Left cardiac atrium (tissue), 4 donors: ENCODE measurements at regions of chr22 and their contacts with region 1.

Region 1: GRCh38 chr22:28855355-28856094 is 27.8 kb upstream of the ZNRF3 start:
- DNase-seq: no peak
- ATAC-seq: peak; percentile 44 to 77

Region 2: DNA sequence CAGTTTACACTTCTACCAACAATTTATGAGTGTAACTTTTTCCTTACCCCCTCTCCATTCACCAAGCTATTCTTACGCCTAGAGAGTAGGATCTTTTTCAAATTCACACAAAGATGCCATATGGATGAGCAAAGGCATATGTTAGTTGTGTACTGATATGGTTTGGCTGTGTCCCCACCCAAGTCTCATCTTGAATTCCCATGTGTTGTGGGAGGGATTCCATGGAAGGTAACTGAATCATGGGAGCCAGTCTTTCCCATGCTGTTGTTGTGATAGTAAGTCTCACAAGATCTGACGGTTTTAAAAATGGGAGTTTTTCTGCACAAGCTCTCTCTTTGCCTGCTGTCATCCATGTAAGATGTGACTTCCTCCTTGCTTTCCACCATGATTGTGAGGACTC is 216.2 kb before region 1 on chr22:
- intact Hi-C with region 1: no loop called
- DNase-seq: no peak
- ATAC-seq: no peak

Region 3: GRCh38 chr22:28951969-28952521 is 96.5 kb after region 1 on chr22:
- intact Hi-C with region 1: loop called in 1 of 2 experiments (anchors 5 kb)
- DNase-seq: no peak
- ATAC-seq: peak; percentile 29 to 72

Region 4: GRCh38 chr22:29040385-29041275 is 185.1 kb after region 1 on chr22:
- intact Hi-C with region 1: loop called (anchors 1 to 5 kb)
- DNase-seq: peak; percentile 74
- ATAC-seq: peak; percentile 82 to 87

Region 5: DNA sequence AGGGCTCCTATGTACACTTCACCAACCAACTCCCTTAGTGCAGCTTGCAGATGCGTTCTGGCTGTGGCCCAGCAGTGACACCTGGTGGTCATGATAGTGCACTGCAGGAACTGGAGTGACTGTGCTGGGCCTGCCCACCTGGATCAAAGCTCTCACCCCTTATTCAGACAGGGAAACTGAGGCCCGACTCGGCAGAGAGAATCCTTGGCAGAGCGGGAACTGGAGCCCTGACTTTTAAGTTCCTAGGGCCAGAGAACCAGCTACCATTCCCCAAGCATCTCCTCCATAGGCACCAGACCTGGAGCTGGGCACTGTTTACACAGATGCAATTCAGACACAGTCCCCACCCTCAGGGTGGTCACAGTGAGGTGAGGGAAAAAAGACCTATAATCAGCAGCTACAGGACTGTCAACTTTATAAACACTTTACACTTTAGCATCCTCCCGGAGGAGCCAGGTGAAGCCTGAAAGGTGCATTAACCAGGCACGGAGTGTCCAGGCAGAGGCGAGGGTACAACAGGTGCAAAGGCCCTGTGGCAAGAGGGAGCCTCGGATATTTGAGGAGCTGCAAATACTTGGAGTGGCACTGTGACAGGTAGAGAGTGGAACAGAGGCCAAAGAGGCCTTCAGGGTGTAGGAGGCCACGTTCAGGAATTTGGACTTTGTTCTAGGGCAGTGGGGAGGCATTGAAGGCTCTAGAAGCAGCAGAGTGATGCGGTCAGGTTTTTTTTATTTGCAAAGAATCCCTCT is 390.3 kb after region 1 on chr22:
- intact Hi-C with region 1: loop called (anchors 5 to 10 kb)
- DNase-seq: peak; percentile 70
- ATAC-seq: peak; percentile 93 to 94